Ovary (tissue), 10 donors: ENCODE measurements at regions of chr2 and their contacts with region 1.

Region 1: DNA sequence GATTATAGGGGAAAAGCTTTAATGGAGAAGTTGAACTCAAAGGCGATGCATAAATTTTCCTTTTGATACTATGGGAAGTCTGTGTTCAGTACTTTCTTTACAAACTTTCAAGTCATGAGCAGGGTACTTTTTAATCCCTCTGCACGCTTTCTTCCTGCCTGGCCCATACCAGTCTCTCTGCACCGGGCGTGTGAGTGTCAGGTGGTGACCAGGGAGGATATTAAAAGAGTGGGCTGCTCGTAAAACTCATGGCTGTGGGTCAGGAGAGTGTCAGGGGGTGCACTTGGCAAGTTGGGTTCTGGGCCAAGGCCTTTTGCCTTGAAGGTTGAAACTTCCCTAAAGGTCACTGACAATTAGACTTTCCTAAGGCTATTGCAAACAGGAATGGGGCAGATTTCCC is 367.8 kb downstream of the GPD2 start:
- DNase-seq: no peak
- H3K4me3 ChIP-seq: no peak overlapping the region
- H3K27ac ChIP-seq: no peak overlapping the region
- H3K4me1 ChIP-seq: no peaks in the 10 kb centered on the region
- H3K27me3 ChIP-seq: no peaks in the 10 kb centered on the region
- CTCF ChIP-seq: no peak
- EP300 ChIP-seq: no peak
- POLR2A ChIP-seq: no peak

Region 2: DNA sequence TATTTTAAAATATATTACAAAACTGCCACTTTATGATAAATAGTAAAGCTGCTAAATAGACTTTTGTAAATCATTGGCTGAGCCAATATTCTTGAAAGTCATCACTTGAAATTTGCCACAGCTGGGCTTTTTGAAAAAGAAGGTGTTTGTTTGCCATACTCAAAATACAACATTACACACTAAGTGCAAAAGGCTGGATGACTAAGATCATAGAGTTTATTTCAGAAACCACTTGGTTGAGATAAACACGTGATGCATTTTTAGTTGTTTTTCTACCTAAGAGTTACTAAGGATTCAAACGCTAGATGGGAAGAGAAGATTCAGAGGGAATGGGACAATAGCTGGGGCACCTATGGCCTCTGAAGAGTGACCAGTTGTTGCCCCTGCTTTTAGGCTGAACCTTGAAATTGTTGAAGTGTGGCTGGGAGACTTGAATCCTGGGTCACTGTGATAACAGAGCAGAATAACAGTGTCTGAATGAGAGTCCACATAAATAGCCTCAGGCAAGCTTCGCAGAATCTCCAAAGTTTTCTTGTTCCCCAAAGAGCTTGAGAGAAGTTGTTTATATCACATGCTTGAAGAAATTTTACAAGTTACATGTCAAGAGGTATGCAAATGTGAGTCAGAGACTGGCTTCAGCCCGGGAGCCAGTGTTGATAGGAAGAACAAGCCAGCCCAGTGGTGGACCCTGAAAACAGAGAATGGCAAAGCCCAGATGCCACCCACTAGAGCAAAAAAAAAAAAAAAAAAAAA is 42.0 kb after region 1 on chr2:
- intact Hi-C with region 1: loop called in 1 of 4 experiments (anchors 1 kb)
- DNase-seq: no peak
- H3K4me3 ChIP-seq: no peak overlapping the region
- H3K27ac ChIP-seq: peak overlapping the region in 1 of 2 donors; percentile 37
- H3K4me1 ChIP-seq: no peaks in the 10 kb centered on the region
- H3K27me3 ChIP-seq: no peaks in the 10 kb centered on the region
- CTCF ChIP-seq: no peak
- EP300 ChIP-seq: no peak
- POLR2A ChIP-seq: no peak